Activated T-helper 1 cell treated with anti-CD3 and anti-CD28 coated beads, Interleukin-12 subunit alpha, Interleukin-12 subunit beta, Interleukin-2, Interleukin-4 antibody, amounts not matched to agents 30 ng/mL and 10 ng/mL and 1 ng/mL, durations not matched to agents 14 hours and 24 hours and 36 hours (primary cell): ENCODE measurements at regions of chr5 and their contacts with region 1.

Region 1: GRCh38 chr5:69217548-69218526 is 16.8 kb upstream of the CDK7 start:
- DNase-seq: peak; percentile 90
- H3K4me3 Mint-ChIP-seq: peak overlapping the region; percentile 98
- H3K27ac Mint-ChIP-seq: peak overlapping the region; percentile 95
- H3K4me1 Mint-ChIP-seq: peaks cover 15% of the 10 kb centered on the region
- H3K27me3 Mint-ChIP-seq: no peaks in the 10 kb centered on the region

Region 2: DNA sequence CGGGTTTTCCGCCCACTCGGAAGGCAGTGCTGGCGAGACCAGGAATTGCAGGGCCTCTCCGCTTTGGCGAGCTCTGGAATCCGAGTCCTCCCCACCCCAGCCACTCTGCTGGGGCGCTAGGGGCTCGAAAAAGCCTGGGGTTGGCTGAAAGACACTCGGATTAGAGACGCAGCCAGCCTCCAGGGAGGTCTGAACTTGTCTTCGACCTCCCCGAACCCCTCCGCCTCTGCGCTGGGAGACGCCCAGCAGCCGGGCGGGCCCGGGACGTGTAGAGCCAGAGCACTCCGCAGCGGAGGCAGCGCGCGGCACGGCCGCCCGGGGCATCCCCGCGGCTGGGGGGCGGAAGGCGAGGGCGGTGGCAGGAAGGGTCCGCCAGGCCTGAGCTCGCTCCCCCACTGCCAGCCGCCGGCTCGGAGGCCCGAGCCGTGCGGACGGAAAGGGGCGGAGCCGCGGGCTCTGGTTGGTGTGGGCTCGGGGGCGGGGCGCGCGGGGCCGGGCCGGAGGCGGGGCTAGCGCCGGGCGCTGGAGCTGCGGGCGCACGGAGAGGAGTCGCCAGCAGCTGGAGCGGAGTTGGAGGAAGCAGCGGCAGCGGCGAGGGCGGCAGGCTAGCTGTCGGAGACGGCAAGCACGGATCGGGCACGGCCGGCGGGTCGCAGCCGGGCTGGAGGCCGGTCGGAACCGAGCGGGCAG is 1002.5 kb before region 1 on chr5 and contains the start of gene PIK3R1:
- intact Hi-C with region 1: loop called (anchors 5 kb)
- DNase-seq: peak; percentile 88
- H3K4me3 Mint-ChIP-seq: peak within 1 kb of the TSS; percentile 91
- H3K27ac Mint-ChIP-seq: peak within 1 kb of the TSS; percentile 93
- H3K4me1 Mint-ChIP-seq: peaks cover 37% of the 10 kb centered on the region
- H3K27me3 Mint-ChIP-seq: no peaks in the 10 kb centered on the region
- total RNA-seq, gene PIK3R1: 43.3 and 46.2 TPM in 2 replicates

Region 3: DNA sequence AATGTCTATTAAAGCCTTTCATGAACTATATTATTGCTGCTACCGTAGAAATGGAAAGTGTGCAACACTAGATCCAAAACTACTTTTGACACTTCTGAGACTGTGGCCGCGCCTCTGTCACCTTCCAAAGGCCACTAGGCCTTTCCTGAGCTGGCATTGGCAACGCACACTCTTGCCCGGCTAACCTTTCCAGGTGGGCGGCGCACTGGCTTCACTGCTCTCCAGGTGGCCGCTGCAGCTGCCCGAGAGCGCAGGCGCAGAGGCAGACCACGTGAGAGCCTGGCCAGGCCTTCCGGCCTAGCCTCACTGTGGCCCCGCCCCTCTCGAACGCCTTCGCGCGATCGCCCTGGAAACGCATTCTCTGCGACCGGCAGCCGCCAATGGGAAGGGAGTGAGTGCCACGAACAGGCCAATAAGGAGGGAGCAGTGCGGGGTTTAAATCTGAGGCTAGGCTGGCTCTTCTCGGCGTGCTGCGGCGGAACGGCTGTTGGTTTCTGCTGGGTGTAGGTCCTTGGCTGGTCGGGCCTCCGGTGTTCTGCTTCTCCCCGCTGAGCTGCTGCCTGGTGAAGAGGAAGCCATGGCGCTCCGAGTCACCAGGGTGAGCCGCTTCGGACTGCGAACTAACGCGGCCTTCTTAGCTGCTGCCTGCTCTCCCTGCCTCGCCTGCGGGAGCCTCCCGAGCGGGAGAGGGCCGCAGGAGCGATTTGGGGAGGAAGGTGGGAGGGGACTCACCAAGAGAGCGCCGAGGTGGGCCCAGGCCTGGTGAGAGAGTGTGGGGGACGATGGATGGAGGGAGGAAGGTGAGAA is 50.9 kb before region 1 on chr5 and contains the start of gene CCNB1:
- intact Hi-C with region 1: loop called (anchors 1 kb)
- DNase-seq: peak; percentile 99
- H3K4me3 Mint-ChIP-seq: peak within 1 kb of the TSS; percentile 90
- H3K27ac Mint-ChIP-seq: peak within 1 kb of the TSS; percentile 83
- H3K4me1 Mint-ChIP-seq: peaks cover 45% of the 10 kb centered on the region
- H3K27me3 Mint-ChIP-seq: no peaks in the 10 kb centered on the region
- total RNA-seq, gene CCNB1: 106 and 115 TPM in 2 replicates

Region 4: DNA sequence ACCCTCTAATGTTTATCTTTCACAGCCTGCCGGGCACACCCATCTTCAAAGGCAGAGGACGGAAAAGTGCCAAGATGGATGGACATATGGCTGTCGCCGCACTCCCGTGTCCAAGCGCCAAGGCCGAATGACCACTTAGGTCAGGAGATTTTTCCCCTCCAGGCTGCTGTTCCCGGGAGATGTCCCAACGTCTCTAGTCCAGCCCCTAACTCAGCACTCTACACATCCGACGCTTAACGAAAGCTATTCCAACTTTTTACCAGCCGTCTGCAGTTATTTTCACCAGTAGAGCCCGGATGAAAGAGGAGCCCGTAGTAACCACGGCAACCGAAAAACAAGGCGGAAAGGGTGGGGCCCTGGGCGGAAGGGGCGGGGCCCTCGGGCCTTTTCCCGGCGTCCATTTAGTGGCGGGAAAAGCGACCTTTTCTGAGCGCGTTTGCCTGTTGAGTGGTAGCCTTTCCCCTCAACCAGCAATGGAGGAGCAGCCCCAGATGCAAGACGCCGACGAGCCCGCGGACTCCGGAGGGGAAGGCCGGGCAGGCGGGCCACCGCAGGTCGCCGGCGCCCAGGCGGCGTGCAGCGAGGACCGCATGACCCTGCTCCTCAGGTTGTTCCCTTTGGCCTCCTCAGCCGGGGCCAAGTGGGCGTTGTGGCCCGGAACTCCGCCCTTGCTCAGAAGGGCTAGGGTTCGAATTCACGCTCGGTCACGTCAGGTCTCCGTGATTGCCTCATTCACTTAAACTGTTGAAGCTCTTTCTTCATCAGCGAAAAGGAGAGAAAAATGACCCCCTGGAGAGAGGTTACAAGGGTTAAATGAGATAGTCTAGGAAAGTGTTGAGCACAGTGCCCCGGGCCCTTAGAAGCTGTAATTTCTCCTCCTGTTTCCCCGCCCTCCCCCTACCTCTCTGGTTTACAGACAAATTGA is 28.4 kb before region 1 on chr5 and contains the start of gene CENPH:
- intact Hi-C with region 1: loop called (anchors 1 kb)
- DNase-seq: peak; percentile 92
- H3K4me3 Mint-ChIP-seq: peak within 1 kb of the TSS; percentile 94
- H3K27ac Mint-ChIP-seq: peak within 1 kb of the TSS; percentile 98
- H3K4me1 Mint-ChIP-seq: peaks cover 16% of the 10 kb centered on the region
- H3K27me3 Mint-ChIP-seq: no peaks in the 10 kb centered on the region
- total RNA-seq, gene CENPH: 32.3 and 35.5 TPM in 2 replicates

Region 5: DNA sequence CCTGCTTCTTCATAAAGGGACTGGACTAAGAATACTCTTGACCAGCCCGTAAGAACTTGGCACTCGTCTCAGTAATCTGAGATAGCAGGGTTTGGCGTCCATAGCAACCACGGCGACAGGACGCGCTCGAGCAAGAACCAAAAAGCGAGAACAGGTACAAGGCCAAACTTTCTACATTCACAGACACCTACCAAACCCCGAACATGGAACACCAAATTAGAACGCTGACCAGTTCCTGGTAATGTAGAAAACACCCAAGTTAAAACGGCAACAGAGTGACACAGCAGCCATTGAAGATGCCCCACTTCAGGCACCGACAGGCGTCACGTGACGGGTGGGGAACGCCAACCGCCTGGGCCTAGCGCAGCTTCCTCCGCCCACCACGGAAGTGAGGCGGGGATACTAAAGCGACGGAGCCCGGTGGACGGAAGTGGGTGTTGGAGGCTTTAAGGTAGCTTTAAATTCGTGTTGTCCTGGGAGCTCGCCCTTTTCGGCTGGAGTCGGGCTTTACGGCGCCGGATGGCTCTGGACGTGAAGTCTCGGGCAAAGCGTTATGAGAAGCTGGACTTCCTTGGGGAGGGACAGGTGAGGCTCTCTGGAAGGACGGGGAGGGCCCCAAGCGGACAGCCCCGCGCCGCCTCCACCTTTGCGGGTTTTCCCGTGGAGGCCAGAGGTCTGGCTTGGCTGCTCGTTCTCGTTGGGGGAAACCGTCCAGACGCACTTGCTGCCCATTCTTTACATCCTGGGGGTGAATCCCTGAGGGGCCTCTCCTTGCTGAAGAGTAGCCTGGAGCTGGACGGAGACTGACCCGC is 16.8 kb after region 1 on chr5 and contains the start of gene CDK7:
- intact Hi-C with region 1: loop called (anchors 1 kb)
- DNase-seq: peak; percentile 92
- H3K4me3 Mint-ChIP-seq: peak within 1 kb of the TSS; percentile 97
- H3K27ac Mint-ChIP-seq: peak within 1 kb of the TSS; percentile 84
- H3K4me1 Mint-ChIP-seq: peaks cover 43% of the 10 kb centered on the region
- H3K27me3 Mint-ChIP-seq: no peaks in the 10 kb centered on the region
- total RNA-seq, gene CDK7: 42.4 and 49.2 TPM in 2 replicates

Region 6: DNA sequence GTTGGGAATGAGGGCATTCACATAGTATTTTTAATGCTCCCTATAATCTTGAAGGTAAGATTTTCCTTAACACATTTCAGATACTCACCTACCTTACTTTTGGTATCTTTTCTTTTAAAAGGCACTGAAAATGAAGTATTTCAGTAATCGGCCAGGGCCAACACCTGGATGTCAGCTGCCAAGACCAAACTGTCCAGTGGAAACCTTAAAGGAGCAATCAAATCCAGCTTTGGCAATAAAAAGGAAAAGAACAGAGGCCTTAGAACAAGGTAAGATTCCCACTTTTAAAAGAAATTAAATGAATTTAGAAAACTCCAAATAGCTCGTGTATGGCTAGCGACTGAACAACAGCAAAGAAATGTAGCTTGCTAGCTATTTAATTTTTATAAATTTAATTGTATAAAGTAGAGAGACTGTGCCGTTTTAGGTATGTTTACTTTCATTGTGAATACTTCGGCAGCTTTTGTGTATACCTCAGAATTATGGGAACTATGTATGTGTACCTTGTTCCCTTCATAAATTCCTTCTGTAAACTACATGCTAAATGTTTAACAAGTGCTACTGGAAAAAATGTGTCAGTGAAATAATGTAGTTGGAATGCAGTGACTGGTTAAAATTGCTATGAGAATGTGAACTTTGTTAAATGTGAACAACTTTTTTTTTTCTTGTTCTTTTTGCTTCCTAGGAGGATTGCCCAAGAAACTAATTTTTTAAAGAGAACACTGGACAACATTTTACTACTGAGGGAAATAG is 58.8 kb after region 1 on chr5:
- intact Hi-C with region 1: no loop called
- DNase-seq: no peak
- H3K4me3 Mint-ChIP-seq: no peak overlapping the region
- H3K27ac Mint-ChIP-seq: no peak overlapping the region
- H3K4me1 Mint-ChIP-seq: peaks cover 7% of the 10 kb centered on the region
- H3K27me3 Mint-ChIP-seq: no peaks in the 10 kb centered on the region

Region 7: GRCh38 chr5:69369369-69370121 is 151.7 kb after region 1 on chr5 and contains the starts of genes AK6, RAD17 and TAF9:
- intact Hi-C with region 1: loop called (anchors 1 kb)
- DNase-seq: peak; percentile 87
- H3K4me3 Mint-ChIP-seq: peak within 1 kb of the TSS; percentile 98
- H3K27ac Mint-ChIP-seq: peak within 1 kb of the TSS; percentile 98
- H3K4me1 Mint-ChIP-seq: peaks cover 36% of the 10 kb centered on the region
- H3K27me3 Mint-ChIP-seq: no peaks in the 10 kb centered on the region
- total RNA-seq, gene AK6: 59.0 and 62.3 TPM in 2 replicates
- total RNA-seq, gene RAD17: 22.0 and 26.9 TPM in 2 replicates
- total RNA-seq, gene TAF9: 60.0 and 65.0 TPM in 2 replicates